ENCODE measurements at regions of chr20 and their contacts with region 1.

Region 1: DNA sequence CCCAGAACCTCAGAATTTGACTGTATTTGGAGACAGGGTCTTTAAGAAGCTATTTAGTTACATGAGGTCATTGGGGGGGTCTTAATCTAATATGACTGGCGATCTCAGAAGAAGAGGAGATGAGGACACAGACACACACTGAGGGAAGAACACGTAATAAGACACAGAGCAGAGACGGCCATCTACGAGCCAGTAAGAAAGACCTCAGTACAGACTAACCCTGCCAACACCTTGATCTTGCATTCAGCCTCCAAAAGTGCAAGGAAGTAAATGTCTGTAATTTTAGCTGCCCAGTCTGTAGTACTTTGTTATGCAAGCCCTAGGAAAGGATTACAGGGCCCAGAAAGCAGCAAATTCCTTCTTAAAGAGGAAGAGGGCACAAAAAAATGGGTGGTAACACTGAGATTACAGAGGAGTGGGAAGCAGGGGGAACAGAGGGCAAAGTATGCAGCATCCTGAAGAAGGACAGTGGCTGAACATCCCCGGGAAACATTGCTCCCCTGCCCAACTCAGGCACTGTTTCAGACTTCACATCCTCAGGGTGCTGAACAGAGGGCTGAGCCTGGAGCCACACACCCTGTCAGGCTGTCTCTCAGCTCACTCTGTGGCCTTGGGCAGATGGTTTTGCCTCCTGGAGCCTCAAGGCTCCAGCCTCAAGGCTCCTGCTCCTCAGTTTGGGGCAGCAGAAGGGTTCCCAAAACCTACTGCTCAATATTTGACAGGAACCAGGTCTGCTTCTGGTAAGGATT is 27.9 kb upstream of the SIRPG start:
- DNase-seq: no peak
- H3K4me3 Mint-ChIP-seq: peak overlapping the region; percentile 69
- H3K27ac Mint-ChIP-seq: peak overlapping the region; percentile 66
- H3K4me1 Mint-ChIP-seq: peaks cover 50% of the 10 kb centered on the region
- H3K27me3 Mint-ChIP-seq: no peaks in the 10 kb centered on the region

Region 2: GRCh38 chr20:1637755-1638154 is 47.7 kb before region 1 on chr20:
- intact Hi-C with region 1: no loop called
- DNase-seq: no peak
- H3K4me3 Mint-ChIP-seq: no peak overlapping the region
- H3K27ac Mint-ChIP-seq: no peak overlapping the region
- H3K4me1 Mint-ChIP-seq: peaks cover 22% of the 10 kb centered on the region
- H3K27me3 Mint-ChIP-seq: no peaks in the 10 kb centered on the region

Region 3: DNA sequence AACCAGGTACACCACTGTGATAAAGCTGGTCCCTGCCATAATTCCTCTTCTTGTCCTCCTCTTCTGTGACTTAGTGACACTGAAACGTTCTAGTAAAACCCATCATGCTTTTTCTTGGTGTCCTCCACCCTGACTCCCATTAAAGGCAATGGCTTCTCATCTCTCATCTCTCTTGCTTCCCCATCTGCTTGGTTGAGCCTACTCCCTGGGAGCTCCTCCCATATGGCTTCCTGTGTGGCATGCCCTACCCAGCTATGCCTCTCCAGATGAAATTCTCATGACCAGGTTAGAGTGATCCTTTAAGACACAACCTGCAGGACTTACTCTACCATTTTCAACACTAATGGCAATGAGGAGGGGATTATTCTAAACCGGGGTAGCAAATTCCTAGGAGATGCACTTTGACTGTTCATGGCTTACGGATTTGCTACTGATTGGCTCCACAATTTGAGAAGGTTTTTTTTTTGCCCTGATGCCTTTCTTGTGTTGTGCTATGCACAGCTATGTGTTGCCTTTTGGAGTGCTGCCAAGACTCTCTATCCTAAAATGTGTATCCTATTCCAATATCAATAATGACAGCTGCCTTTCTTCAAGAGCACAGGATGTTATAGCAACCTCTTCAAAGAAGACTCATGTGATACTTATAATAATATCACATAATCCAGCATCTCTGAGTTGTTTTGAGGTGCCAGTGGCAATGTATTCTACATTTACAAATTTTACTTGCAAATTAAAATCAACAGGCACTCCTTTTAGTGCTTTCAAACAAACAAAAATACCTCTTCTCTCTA is 34.0 kb before region 1 on chr20:
- intact Hi-C with region 1: loop called (anchors 5 kb)
- DNase-seq: no peak
- H3K4me3 Mint-ChIP-seq: peak overlapping the region; percentile 19
- H3K27ac Mint-ChIP-seq: peak overlapping the region; percentile 30
- H3K4me1 Mint-ChIP-seq: peaks cover 68% of the 10 kb centered on the region
- H3K27me3 Mint-ChIP-seq: no peaks in the 10 kb centered on the region

Region 4: DNA sequence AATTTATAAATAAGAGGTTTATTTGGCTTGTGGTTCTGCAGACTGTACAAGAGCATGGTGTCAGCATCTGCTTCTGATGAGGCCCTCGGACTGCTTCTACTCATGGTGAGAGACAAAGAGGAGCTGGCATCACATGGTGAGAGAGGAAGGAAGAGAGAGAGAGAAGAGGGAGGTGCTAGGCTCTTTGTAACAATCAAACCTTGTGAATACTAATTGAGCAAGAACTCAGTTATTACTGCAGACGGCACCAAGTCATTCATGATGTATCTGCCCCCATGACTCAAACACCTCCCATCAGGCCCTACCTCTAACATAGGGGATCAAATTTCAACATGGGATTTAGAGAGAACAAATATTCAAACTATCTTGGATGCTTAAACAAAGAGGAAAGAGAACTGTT is 21.6 kb before region 1 on chr20:
- intact Hi-C with region 1: loop called (anchors 2 kb)
- DNase-seq: no peak
- H3K4me3 Mint-ChIP-seq: peak overlapping the region; percentile 11
- H3K27ac Mint-ChIP-seq: peak overlapping the region; percentile 79
- H3K4me1 Mint-ChIP-seq: peaks cover 82% of the 10 kb centered on the region
- H3K27me3 Mint-ChIP-seq: no peaks in the 10 kb centered on the region

Region 5: GRCh38 chr20:2663887-2664719 is 978.6 kb after region 1 on chr20 and contains the start of gene IDH3B:
- intact Hi-C with region 1: no loop called
- DNase-seq: peak; percentile 90
- H3K4me3 Mint-ChIP-seq: peak within 1 kb of the TSS; percentile 92
- H3K27ac Mint-ChIP-seq: peak within 1 kb of the TSS; percentile 95
- H3K4me1 Mint-ChIP-seq: peaks cover 15% of the 10 kb centered on the region
- H3K27me3 Mint-ChIP-seq: peaks cover 4% of the 10 kb centered on the region
- total RNA-seq, gene IDH3B: 111 and 112 TPM in 2 replicates

Measured in activated T-helper 2 cell treated with anti-CD3 and anti-CD28 coated beads, Interferon-gamma antibody, Interleukin-2, Interleukin-4, amounts not matched to agents 10 μg/mL and 5 μg/mL and 100 μg/mL, durations not matched to agents 14 hours and 24 hours and 36 hours (primary cell).